Breast epithelium (tissue), 4 donors: ENCODE measurements at regions of chr20 and their contacts with region 1.

Region 1: DNA sequence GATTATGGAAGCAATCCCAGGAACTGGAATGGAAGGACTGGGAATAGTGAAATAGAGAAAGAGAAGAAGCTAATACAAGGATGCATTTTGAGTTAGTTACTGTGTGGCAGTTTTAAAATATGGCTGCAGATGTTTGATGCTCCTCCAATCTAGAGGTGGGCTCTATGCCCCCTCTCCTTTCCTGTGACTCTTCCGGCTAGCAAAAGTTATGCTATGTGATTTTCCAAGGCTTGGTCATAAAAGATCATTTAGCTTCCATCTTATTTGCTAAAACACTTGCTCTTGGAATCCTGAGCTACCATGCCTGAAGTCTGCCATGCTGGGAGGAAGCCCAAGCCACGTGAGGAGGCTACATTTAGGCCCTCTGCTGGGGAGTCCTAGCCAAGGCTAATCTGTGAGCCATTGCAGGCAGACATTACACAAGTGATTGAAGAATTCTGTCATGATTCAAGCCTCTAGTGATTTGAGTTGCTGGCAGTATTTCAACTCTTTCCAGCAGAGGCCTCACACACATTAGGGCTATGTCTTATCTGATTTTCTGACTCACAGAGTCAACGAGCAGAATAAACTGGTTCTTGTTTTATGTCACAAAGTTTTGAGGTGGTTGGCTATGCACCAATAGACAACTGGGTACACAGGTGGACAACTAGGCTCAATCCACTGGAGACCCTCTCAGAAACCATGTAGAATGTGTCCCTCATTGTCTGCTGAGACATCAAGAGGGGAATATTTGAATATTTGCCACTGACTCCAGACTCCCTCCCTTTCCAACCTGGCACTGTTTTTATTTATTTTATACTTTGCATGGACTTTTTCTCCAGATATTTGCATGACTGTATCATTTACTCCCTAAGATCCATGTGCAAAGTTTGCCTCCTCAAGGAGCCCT is 227.2 kb upstream of the SULF2 start:
- DNase-seq: no peak
- H3K4me3 ChIP-seq: no peak overlapping the region
- H3K27ac ChIP-seq: no peak overlapping the region
- H3K4me1 ChIP-seq: no peaks in the 10 kb centered on the region
- H3K27me3 ChIP-seq: no peaks in the 10 kb centered on the region
- CTCF ChIP-seq: no peak
- POLR2A ChIP-seq: no peak

Region 2: GRCh38 chr20:47727170-47727880 is 285.1 kb before region 1 on chr20:
- intact Hi-C with region 1: no loop called
- DNase-seq: no peak
- H3K4me3 ChIP-seq: no peak overlapping the region
- H3K27ac ChIP-seq: no peak overlapping the region
- H3K4me1 ChIP-seq: no peaks in the 10 kb centered on the region
- H3K27me3 ChIP-seq: no peaks in the 10 kb centered on the region
- CTCF ChIP-seq: no peak
- POLR2A ChIP-seq: no peak

Region 3: GRCh38 chr20:48679550-48680187 is 667.2 kb after region 1 on chr20:
- intact Hi-C with region 1: no loop called
- DNase-seq: no peak
- H3K4me3 ChIP-seq: no peak overlapping the region
- H3K27ac ChIP-seq: no peak overlapping the region
- H3K4me1 ChIP-seq: peaks cover 7% of the 10 kb centered on the region in 2 donors
- H3K27me3 ChIP-seq: no peaks in the 10 kb centered on the region
- CTCF ChIP-seq: no peak
- POLR2A ChIP-seq: no peak

Region 4: DNA sequence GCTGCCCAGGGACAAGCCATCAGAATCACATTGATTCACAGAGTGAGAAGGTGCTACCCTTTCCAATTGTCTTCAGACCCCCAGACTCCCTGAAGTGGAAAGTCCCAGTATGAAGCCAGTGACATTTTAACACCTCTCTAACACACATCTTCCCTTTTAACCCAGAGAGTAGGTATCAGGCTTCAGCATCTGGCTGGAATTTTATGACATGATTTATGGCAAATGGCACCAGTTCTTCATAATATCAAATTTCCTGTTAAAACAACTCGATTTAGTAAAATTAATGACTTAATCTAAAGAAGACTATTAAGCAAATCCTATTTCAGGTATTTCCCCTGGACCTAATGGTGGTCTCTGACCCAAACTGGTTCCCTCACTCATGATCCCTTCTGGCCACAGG is 1445.0 kb after region 1 on chr20:
- intact Hi-C with region 1: loop called (anchors 5 kb)
- DNase-seq: no peak
- H3K4me3 ChIP-seq: no peak overlapping the region
- H3K27ac ChIP-seq: no peak overlapping the region
- H3K4me1 ChIP-seq: no peaks in the 10 kb centered on the region
- H3K27me3 ChIP-seq: no peaks in the 10 kb centered on the region
- CTCF ChIP-seq: no peak
- POLR2A ChIP-seq: no peak